ENCODE measurements at regions of chr10 and their contacts with region 1.

Region 1: DNA sequence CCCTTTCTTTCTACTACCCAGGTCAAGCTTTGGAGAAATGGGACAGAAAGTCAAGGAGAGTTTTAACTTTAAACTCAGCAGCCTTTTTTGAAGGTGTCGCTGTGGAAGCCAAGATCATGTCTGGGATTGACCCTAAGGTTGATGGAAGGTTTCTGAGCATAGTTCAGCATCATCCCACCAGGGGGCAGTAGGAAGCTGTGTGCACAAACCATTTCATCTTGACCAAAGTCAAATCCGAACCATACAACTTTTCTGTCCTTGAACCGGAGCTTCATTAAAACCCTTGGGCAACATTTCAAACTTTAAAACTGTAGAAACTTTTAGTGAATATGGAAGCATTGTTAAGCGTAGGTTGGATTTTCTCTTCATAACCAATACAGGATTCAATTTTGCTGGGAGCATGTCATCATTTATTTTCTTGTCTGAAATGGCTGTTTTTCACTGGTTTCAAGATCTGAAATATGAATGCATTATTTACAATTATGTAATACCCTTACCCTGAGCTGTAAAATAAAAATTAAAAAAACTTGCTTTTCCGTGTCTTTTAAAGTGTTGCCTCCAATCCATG is 214.4 kb upstream of the KIAA1217 start:
- DNase-seq: peak; percentile 49
- CTCF ChIP-seq: peak; percentile 69

Region 2: GRCh38 chr10:24008164-24009091 is 13.9 kb after region 1 on chr10:
- CTCF ChIA-PET with region 1: interaction called, 24 read pairs
- POLR2A ChIA-PET with region 1: no interaction called
- DNase-seq: no peak
- CTCF ChIP-seq: no peak

Region 3: DNA sequence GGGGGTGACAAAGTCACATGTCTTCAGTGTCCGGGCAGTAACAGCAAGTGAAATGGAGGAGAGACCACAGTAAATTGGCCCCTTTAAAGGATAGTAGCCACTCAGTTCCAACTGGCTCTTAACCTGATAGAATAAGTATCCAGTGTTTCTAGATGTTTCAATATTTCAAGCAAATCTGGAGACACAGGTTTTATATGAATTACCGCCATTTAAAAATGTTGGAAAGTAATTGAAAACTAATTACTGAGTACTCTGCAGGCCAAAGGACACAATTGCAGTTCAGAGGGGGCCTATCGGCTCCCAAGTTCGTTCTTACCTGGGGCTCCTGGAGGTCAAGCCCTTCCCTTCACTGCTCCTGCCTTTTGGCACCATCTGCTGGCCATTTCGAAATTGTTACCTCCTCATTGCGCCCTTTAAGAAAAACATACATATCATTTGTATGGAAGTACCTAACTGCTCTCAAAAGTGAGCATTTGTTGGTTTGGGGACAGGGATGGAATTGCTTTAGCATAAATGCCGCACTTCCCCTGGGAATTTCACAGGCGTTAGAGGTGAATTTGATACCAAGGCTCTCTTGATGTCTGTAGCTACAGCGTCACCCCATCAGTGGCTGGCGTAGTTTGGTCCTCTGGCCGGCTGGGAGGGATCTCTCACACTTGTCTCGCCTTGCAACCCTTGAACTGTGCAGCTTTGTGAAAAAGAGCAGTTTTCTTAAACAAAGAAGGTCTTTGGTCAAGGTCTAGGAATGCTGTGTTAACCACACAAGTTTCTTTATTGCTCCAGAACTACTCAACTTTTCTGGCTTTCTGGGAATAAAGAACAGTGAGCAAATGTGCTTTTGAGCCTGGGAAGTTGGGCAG is 509.1 kb after region 1 on chr10:
- CTCF ChIA-PET with region 1: interaction called, 42 read pairs
- POLR2A ChIA-PET with region 1: no interaction called
- DNase-seq: peak; percentile 50
- CTCF ChIP-seq: peak; percentile 74

Region 4: GRCh38 chr10:24518981-24519597 is 524.5 kb after region 1 on chr10:
- CTCF ChIA-PET with region 1: interaction called, 53 read pairs
- POLR2A ChIA-PET with region 1: no interaction called
- DNase-seq: peak; percentile 54
- CTCF ChIP-seq: peak; percentile 68

Region 5: GRCh38 chr10:24556750-24557742 is 562.5 kb after region 1 on chr10:
- CTCF ChIA-PET with region 1: interaction called, 24 read pairs
- POLR2A ChIA-PET with region 1: no interaction called
- DNase-seq: peak; percentile 68
- CTCF ChIP-seq: peak; percentile 73

Measured in GM10248 (cell line).